ENCODE measurements at regions of chr7 and their contacts with region 1.

Region 1: GRCh38 chr7:66790196-66790595 is 49.7 kb downstream of the RABGEF1 start:
- DNase-seq: peak in 1 of 2 donors; percentile 10
- ATAC-seq: peak in 2 of 8 donors; percentile 21 to 30
- H3K4me3 ChIP-seq: no peak overlapping the region
- H3K27ac ChIP-seq: no peak overlapping the region
- H3K4me1 ChIP-seq: peaks cover 0 to 14% (median 0%) of the 10 kb centered on the region in 9 donors
- H3K27me3 ChIP-seq: no peaks in the 10 kb centered on the region
- CTCF ChIP-seq: no peak

Region 2: DNA sequence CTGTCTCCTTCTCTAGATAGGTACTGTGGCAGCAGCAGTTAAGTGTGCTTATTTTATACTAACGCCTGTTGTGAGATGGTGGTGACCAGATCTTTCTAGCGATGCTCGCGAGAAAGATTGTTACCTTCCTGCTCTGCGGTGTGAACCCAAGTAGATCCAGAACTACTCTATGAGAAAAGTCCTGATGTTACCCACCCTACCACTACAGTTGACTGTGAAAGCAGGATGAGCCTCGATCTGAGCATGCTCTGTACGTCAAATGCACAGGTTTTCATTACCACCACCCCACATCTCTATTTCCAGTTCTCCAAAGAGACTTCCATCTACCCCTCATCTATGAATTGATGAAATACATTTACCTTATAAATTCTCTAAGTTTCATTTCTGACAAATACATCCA is 226.2 kb before region 1 on chr7:
- intact Hi-C with region 1: loop called in 3 of 10 experiments (anchors 2 kb)
- DNase-seq: no peak
- ATAC-seq: no peak
- H3K4me3 ChIP-seq: no peak overlapping the region
- H3K27ac ChIP-seq: no peak overlapping the region
- H3K4me1 ChIP-seq: no peaks in the 10 kb centered on the region
- H3K27me3 ChIP-seq: no peaks in the 10 kb centered on the region
- CTCF ChIP-seq: no peak

Region 3: GRCh38 chr7:66715676-66716075 is 74.5 kb before region 1 on chr7:
- intact Hi-C with region 1: no loop called
- DNase-seq: no peak
- ATAC-seq: no peak
- H3K4me3 ChIP-seq: no peak overlapping the region
- H3K27ac ChIP-seq: no peak overlapping the region
- H3K4me1 ChIP-seq: no peaks in the 10 kb centered on the region
- H3K27me3 ChIP-seq: no peaks in the 10 kb centered on the region
- CTCF ChIP-seq: no peak

Region 4: GRCh38 chr7:66741710-66742049 is 48.5 kb before region 1 on chr7:
- intact Hi-C with region 1: no loop called
- DNase-seq: no peak
- ATAC-seq: no peak
- H3K4me3 ChIP-seq: peak overlapping the region; percentile 85 to 99 (median 98)
- H3K27ac ChIP-seq: peak overlapping the region in 8 of 10 donors; percentile 89 to 99 (median 98)
- H3K4me1 ChIP-seq: peaks cover 2 to 42% (median 30%) of the 10 kb centered on the region in 9 donors
- H3K27me3 ChIP-seq: no peaks in the 10 kb centered on the region
- CTCF ChIP-seq: no peak

Region 5: GRCh38 chr7:66807736-66808135 is 17.5 kb after region 1 on chr7:
- intact Hi-C with region 1: no loop called
- DNase-seq: no peak
- ATAC-seq: no peak
- H3K4me3 ChIP-seq: no peak overlapping the region
- H3K27ac ChIP-seq: no peak overlapping the region
- H3K4me1 ChIP-seq: no peaks in the 10 kb centered on the region
- H3K27me3 ChIP-seq: no peaks in the 10 kb centered on the region
- CTCF ChIP-seq: no peak

Measured in heart right ventricle (tissue), 16 donors.